ENCODE measurements at regions of chr9 and their contacts with region 1.

Region 1: DNA sequence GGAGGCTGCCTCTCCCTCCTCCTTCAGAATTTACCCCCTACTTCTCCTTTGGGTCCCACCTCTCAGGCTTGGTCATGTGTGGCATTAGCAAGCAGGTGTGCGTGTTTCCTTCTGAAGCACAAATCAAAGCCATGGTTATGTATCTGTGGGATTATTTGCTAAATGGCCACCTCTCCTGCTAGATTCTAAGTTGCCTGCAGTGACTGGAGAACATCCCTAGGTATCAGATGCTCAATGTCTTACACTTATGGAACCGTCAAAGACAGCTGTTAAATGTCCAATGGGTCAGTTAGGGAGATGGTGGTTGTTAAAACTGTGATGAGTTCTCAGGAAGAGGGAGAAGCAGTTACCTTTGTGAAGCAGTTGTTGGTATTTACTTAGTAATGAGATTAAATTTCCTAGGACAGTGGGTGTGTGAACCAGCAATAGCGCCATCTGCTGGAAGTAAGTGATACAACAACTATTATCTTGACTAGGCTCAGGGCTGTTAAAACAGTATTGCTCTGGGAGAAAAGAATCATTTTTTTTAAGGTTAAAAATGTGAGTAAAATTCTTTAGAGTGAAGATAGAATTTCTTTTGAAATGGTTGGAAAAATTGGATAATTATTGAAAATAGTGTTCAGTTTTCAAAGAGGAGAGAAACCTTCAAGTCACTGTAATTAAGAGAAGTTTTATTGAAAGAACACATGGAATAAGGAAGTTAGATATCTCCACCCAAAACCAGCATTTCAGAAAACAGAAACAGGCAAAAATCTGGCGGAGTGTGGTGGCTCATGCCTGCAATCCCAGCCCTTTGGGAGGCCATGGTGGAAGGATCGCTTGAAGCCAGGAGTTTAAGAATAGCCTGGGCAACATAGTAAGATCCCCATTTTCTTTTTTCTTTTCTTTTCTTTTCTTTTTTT is 71.3 kb downstream of the TMC1 start:
- DNase-seq: peak; percentile 73
- H3K4me3 ChIP-seq: no peak overlapping the region
- CTCF ChIP-seq: peak; percentile 66

Region 2: GRCh38 chr9:72333709-72334108 is 259.0 kb before region 1 on chr9:
- in situ Hi-C with region 1: no loop called
- DNase-seq: no peak
- H3K4me3 ChIP-seq: no peak overlapping the region
- CTCF ChIP-seq: no peak

Region 3: GRCh38 chr9:72364679-72365524 is 227.9 kb before region 1 on chr9 and contains the start of gene ZFAND5:
- in situ Hi-C with region 1: loop called (anchors 25 kb)
- DNase-seq: peak; percentile 99
- H3K4me3 ChIP-seq: peak within 1 kb of the TSS; percentile 85
- CTCF ChIP-seq: no peak

Region 4: GRCh38 chr9:72680593-72681282 is 88.0 kb after region 1 on chr9:
- in situ Hi-C with region 1: no loop called
- DNase-seq: no peak
- H3K4me3 ChIP-seq: no peak overlapping the region
- CTCF ChIP-seq: no peak

Region 5: GRCh38 chr9:72827950-72828731 is 235.4 kb after region 1 on chr9:
- in situ Hi-C with region 1: no loop called
- DNase-seq: no peak
- H3K4me3 ChIP-seq: no peak overlapping the region
- CTCF ChIP-seq: no peak